HCT116 (cell line): ENCODE measurements at regions of chr13 and their contacts with region 1.

Region 1: DNA sequence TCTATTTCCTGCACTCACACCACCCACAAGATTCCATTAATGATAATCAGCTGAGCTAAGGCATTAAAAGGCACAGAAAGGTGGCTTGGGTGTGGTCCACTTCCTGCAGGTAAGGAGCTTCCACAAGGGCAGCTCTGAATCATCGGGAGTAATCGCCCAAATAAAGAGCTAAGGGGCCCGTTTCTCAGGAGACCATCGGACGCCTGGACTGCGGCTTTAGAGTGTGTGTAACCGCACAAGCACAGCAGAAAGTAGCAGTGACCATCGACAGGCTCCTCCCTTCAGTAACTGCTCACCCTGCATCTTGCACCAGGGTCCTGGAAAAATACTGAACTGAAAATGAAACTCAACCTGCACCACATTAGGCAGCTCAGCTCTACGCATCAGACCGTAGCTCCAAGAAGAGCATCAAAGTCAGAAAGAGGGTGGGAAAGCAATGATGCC is 6.0 kb downstream of the STK24 start:
- DNase-seq: peak; percentile 83
- ATAC-seq: peak; percentile 76
- H3K4me3 ChIP-seq: peak overlapping the region; percentile 33 to 48
- H3K27ac ChIP-seq: peak overlapping the region; percentile 67
- H3K4me1 ChIP-seq: peaks cover 54 to 80% of the 10 kb centered on the region in 2 experiments
- H3K27me3 ChIP-seq: no peaks in the 10 kb centered on the region
- CTCF ChIP-seq: no peak
- POLR2A ChIP-seq: no peak
- RAD21 ChIP-seq: no peak

Region 2: GRCh38 chr13:98509271-98510155 is 61.4 kb before region 1 on chr13:
- CTCF ChIA-PET with region 1: no interaction called
- POLR2A ChIA-PET with region 1: interaction called, 3 read pairs
- RAD21 ChIA-PET with region 1: no interaction called
- intact Hi-C with region 1: loop called (anchors 5 kb)
- DNase-seq: peak; percentile 63
- ATAC-seq: peak; percentile 88
- H3K4me3 ChIP-seq: peak overlapping the region in 1 of 2 experiments; percentile 28; a peak in 2 of 4 replicates
- H3K27ac ChIP-seq: peak overlapping the region; percentile 5; the same call in 1 of the 2 replicates
- H3K4me1 ChIP-seq: peaks cover 39 to 49% of the 10 kb centered on the region in 2 experiments
- H3K27me3 ChIP-seq: no peaks in the 10 kb centered on the region
- CTCF ChIP-seq: no peak
- POLR2A ChIP-seq: no peak
- RAD21 ChIP-seq: no peak

Region 3: DNA sequence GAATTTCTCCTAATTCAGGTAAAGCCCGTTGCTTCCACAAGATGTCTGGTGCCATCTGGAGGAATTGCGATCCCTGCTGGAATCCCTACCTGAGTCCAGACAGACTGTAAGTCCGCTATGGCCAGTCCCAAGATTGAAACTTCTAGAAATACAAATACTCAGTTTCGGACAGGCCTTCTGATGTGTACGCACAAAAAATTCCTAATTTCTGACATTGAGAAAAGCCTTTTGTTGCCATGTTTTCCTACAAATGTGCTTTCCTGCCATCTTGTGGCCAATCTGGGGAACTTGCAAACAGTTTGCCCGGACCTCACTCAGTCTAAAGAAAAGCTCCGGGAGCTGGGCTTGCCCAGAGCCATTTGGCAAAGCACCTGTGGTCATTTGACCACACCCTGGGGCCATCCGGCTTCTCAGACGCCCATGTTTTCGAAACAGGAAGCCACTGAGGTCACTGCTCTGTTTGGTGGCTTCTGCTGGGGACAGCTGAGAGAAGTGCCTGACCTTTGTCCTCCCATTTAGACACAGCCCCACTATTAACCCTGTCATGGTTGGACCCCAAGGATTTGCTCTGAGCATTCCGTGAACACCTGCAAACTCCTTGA is 102.1 kb after region 1 on chr13:
- CTCF ChIA-PET with region 1: no interaction called
- POLR2A ChIA-PET with region 1: no interaction called
- RAD21 ChIA-PET with region 1: no interaction called
- intact Hi-C with region 1: no loop called
- DNase-seq: peak; percentile 71
- ATAC-seq: peak; percentile 94
- H3K4me3 ChIP-seq: no peak overlapping the region; a peak in 1 of 4 replicates
- H3K27ac ChIP-seq: no peak overlapping the region
- H3K4me1 ChIP-seq: peaks cover 0 to 11% of the 10 kb centered on the region in 2 experiments; a peak in 2 of 4 replicates
- H3K27me3 ChIP-seq: no peaks in the 10 kb centered on the region
- CTCF ChIP-seq: peak; percentile 80 to 99 (median 97)
- POLR2A ChIP-seq: no peak
- RAD21 ChIP-seq: peak; percentile 92

Region 4: GRCh38 chr13:99468971-99469540 is 898.1 kb after region 1 on chr13:
- CTCF ChIA-PET with region 1: no interaction called
- POLR2A ChIA-PET with region 1: no interaction called
- RAD21 ChIA-PET with region 1: no interaction called
- intact Hi-C with region 1: no loop called
- DNase-seq: no peak
- ATAC-seq: no peak
- H3K4me3 ChIP-seq: no peak overlapping the region
- H3K27ac ChIP-seq: no peak overlapping the region
- H3K4me1 ChIP-seq: no peaks in the 10 kb centered on the region
- H3K27me3 ChIP-seq: peaks cover 4% of the 10 kb centered on the region
- CTCF ChIP-seq: no peak
- POLR2A ChIP-seq: no peak
- RAD21 ChIP-seq: no peak